Cardiac septum (tissue), 1 donor: ENCODE measurements at regions of chr6 and their contacts with region 1.

Region 1: GRCh38 chr6:159134701-159135364 is 34.4 kb upstream of the FNDC1 start:
- DNase-seq: no peak

Region 2: DNA sequence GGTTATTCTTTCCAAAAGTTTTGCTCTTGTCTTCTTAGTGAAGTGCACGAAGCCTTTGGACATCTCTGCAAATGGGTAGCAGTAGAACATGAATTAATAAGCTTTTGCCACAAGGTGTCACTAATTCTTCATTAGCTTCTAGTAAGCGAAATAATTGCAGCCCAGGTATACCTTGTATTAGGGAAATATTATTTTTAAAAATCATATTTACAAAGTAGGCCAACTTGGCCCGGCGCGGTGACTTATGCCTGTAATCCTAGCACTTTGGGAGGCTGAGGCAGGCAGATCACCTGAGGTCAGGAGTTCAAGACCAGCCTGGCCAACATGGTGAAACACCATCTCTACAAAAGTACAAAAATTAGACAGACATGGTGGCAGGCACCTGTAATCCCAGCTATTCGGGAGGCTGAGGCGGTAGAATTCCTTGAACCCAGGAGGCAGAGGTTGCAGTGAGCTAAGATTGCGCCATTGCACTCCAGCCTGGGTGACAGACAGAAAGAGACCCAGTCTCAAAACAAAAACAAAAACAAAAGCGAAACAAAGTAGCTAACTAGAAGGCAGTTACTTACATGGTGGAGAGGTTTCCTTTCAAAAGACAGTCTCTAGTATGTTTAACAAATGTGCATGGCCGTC is 126.1 kb before region 1 on chr6:
- intact Hi-C with region 1: loop called (anchors 1 kb)
- DNase-seq: no peak